ENCODE measurements at regions of chr12 and their contacts with region 1.

Region 1: DNA sequence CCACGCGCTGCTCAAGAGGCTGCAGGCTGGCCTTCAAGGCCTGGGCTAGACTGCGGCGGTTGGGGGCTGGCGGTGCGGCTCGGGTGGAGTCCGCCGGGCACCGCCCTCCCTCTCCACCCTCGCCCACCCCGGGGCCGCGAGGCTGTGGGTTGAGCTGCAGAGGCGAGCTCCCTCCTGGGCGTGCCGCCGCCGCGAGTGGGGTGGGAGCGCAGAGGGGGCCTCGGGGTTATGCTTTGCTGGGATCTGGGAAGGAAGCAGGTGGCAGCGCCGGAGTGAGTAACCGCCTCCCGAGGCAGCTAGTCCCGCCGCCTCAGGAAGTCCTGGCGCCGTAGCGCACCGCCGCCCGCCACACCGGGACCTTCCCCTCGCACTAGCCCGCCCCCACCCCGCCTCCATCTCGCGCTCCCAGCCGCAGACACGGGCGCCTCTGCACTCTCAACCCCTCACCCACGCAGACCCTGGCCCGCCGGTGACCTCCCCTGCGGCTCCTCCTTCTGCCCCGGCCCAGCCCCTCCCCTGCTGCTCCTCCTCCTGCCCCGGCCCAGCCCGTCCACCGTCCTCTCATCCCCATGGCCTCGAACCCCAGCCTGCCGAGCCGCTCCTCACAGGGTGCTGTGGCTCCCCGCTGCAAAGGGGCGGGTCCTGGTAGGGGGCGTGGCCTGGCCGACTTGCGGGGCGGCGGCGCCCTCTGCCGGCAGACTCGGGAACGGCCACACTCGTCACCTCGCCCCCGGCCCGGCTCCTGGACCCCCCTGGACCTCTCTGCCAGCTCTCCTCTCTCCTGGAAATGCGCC is 16.6 kb downstream of the TAMALIN start:
- DNase-seq: peak; percentile 86 to 91
- ATAC-seq: peak; percentile 48 to 68 (median 58)
- H3K4me3 ChIP-seq: peak overlapping the region; percentile 20 to 62 (median 54)
- H3K27ac ChIP-seq: peak overlapping the region in 9 of 10 donors; percentile 20 to 84 (median 54)
- H3K4me1 ChIP-seq: peaks cover 5 to 59% (median 45%) of the 10 kb centered on the region in 9 donors
- H3K27me3 ChIP-seq: peaks cover 0 to 7% (median 0%) of the 10 kb centered on the region in 7 donors
- CTCF ChIP-seq: peak; percentile 94 to 97 (median 97)

Region 2: DNA sequence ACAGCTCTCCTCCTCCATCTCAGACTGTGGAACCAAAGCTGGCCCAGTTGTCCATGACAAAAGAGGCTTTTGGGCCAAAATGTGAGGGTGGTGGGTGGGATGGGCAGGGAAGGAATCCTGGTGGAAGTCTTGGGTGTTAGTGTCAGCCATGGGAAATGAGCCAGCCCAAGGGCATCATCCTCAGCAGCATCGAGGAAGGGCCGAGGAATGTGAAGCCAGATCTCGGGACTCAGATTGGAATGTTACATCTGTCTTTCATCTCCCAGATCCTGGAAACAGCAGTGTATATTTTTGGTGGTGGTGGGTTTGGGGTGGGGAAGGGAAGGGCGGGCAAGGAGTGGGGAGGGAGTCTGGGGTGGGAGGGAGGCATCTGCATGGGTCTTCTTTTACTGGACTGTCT is 28.4 kb before region 1 on chr12:
- intact Hi-C with region 1: loop called in 2 of 10 experiments (anchors 1 to 2 kb)
- DNase-seq: no peak
- ATAC-seq: no peak
- H3K4me3 ChIP-seq: no peak overlapping the region
- H3K27ac ChIP-seq: no peak overlapping the region
- H3K4me1 ChIP-seq: peaks cover 0 to 6% (median 0%) of the 10 kb centered on the region in 9 donors
- H3K27me3 ChIP-seq: no peaks in the 10 kb centered on the region
- CTCF ChIP-seq: no peak

Region 3: GRCh38 chr12:52004042-52004648 is 19.2 kb before region 1 on chr12:
- intact Hi-C with region 1: loop called in 6 of 10 experiments (anchors 1 to 2 kb)
- DNase-seq: peak; percentile 40 to 63
- ATAC-seq: peak in 5 of 8 donors; percentile 12 to 33 (median 25)
- H3K4me3 ChIP-seq: no peak overlapping the region
- H3K27ac ChIP-seq: peak overlapping the region in 2 of 10 donors; percentile 25 to 41
- H3K4me1 ChIP-seq: peaks cover 4 to 46% (median 25%) of the 10 kb centered on the region in 9 donors
- H3K27me3 ChIP-seq: peaks cover 0 to 30% (median 11%) of the 10 kb centered on the region in 7 donors
- CTCF ChIP-seq: peak; percentile 58 to 78 (median 73)

Region 4: GRCh38 chr12:52050761-52051541 is 27.6 kb after region 1 on chr12 and contains the start of gene NR4A1:
- intact Hi-C with region 1: loop called in 3 of 10 experiments (anchors 1 kb)
- DNase-seq: peak; percentile 99
- ATAC-seq: peak; percentile 70 to 92 (median 86)
- H3K4me3 ChIP-seq: peak within 1 kb of the TSS; percentile 38 to 77 (median 66)
- H3K27ac ChIP-seq: peak within 1 kb of the TSS; percentile 88 to 98 (median 96)
- H3K4me1 ChIP-seq: peaks cover 31 to 87% (median 60%) of the 10 kb centered on the region in 9 donors
- H3K27me3 ChIP-seq: peaks cover 0 to 5% (median 0%) of the 10 kb centered on the region in 7 donors
- CTCF ChIP-seq: peak in 8 of 9 donors; percentile 9 to 69 (median 34)
- total RNA-seq, gene NR4A1: 34.6 to 588 (median 105) TPM

Region 5: GRCh38 chr12:52069327-52070184 is 46.2 kb after region 1 on chr12 and contains the start of gene ATG101:
- intact Hi-C with region 1: loop called in 5 of 10 experiments (anchors 1 to 5 kb)
- DNase-seq: peak; percentile 88 to 93
- ATAC-seq: peak; percentile 96 to 98 (median 97)
- H3K4me3 ChIP-seq: peak within 1 kb of the TSS; percentile 68 to 98 (median 82)
- H3K27ac ChIP-seq: peak within 1 kb of the TSS; percentile 64 to 96 (median 93)
- H3K4me1 ChIP-seq: peaks cover 12 to 54% (median 33%) of the 10 kb centered on the region in 9 donors
- H3K27me3 ChIP-seq: no peaks in the 10 kb centered on the region
- CTCF ChIP-seq: peak; percentile 49 to 87 (median 67)
- total RNA-seq, gene ATG101: 17.5 to 31.8 (median 22.2) TPM

Region 6: GRCh38 chr12:52082988-52083637 is 59.7 kb after region 1 on chr12:
- intact Hi-C with region 1: loop called (anchors 1 to 5 kb)
- DNase-seq: peak; percentile 68 to 72
- ATAC-seq: peak; percentile 25 to 70 (median 50)
- H3K4me3 ChIP-seq: no peak overlapping the region
- H3K27ac ChIP-seq: peak overlapping the region in 9 of 10 donors; percentile 25 to 86 (median 74)
- H3K4me1 ChIP-seq: peaks cover 14 to 38% (median 34%) of the 10 kb centered on the region in 9 donors
- H3K27me3 ChIP-seq: peaks cover 0 to 16% (median 0%) of the 10 kb centered on the region in 7 donors
- CTCF ChIP-seq: peak; percentile 92 to 99 (median 97)

Region 7: DNA sequence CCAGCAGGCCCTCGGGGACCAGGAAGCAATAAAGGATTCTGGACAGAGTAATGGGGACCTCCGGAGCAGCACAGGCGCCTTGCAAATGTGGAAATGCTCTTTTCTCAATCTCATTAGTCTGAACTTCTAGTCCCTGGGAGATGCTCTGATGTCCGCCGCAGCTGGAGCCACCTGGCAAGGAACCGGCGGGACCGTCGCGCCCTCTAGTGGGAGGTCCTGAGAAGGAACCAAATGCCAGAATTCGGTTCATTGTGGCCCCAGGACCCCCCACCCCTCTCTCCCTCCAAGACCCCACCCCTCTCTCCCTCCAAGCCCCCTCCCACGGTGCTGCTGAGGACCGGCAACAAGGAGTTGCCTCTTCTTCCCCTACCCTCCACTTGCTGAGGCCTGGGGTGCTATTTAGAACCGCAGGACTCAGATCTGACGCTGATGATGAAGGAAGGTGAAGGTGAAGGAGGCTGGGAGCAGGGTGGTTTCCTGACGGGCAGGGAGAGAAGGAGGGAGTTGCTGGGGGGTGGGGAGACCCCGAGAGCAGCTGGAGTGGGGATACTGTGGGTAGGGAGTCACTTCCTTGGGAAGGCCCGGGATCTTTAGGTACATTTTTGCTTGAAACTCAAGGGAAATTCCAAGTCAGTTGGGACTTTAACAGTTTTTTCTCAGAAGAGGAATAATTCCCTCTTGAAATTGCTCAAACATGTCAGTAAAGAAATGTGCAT is 98.6 kb after region 1 on chr12:
- intact Hi-C with region 1: loop called in 6 of 10 experiments (anchors 2 to 5 kb)
- DNase-seq: peak; percentile 65 to 77
- ATAC-seq: peak in 7 of 8 donors; percentile 13 to 54 (median 28)
- H3K4me3 ChIP-seq: no peak overlapping the region
- H3K27ac ChIP-seq: no peak overlapping the region
- H3K4me1 ChIP-seq: peaks cover 14 to 35% (median 25%) of the 10 kb centered on the region in 9 donors
- H3K27me3 ChIP-seq: peaks cover 0 to 29% (median 14%) of the 10 kb centered on the region in 7 donors
- CTCF ChIP-seq: peak; percentile 67 to 85 (median 81)

Measured in heart right ventricle (tissue), 16 donors.